H1 (cell line): ENCODE measurements at regions of chr1 and their contacts with region 1.

Region 1: GRCh38 chr1:219066631-219067349 is 106.9 kb upstream of the LYPLAL1 start:
- DNase-seq: no peak
- H3K4me3 ChIP-seq: no peak overlapping the region
- H3K27ac ChIP-seq: no peak overlapping the region
- H3K4me1 ChIP-seq: no peaks in the 10 kb centered on the region
- H3K27me3 ChIP-seq: no peaks in the 10 kb centered on the region
- CTCF ChIP-seq: peak in 1 of 3 experiments; percentile 35; a peak in 2 of 4 replicates
- EP300 ChIP-seq: no peak
- POLR2A ChIP-seq: no peak
- RAD21 ChIP-seq: peak; percentile 64 to 70

Region 2: GRCh38 chr1:219050822-219051125 is 16.0 kb before region 1 on chr1:
- CTCF ChIA-PET with region 1: interaction called, 10 read pairs
- POLR2A ChIA-PET with region 1: no interaction called
- DNase-seq: no peak
- H3K4me3 ChIP-seq: no peak overlapping the region
- H3K27ac ChIP-seq: no peak overlapping the region
- H3K4me1 ChIP-seq: no peaks in the 10 kb centered on the region
- H3K27me3 ChIP-seq: peaks cover 0 to 1% (median 0%) of the 10 kb centered on the region in 4 experiments; a peak in 1 of 7 replicates
- CTCF ChIP-seq: no peak
- EP300 ChIP-seq: no peak
- POLR2A ChIP-seq: no peak
- RAD21 ChIP-seq: no peak

Region 3: GRCh38 chr1:219081943-219082925 is 15.4 kb after region 1 on chr1:
- CTCF ChIA-PET with region 1: interaction called, 29 read pairs
- POLR2A ChIA-PET with region 1: no interaction called
- DNase-seq: no peak
- H3K4me3 ChIP-seq: no peak overlapping the region
- H3K27ac ChIP-seq: no peak overlapping the region
- H3K4me1 ChIP-seq: no peaks in the 10 kb centered on the region
- H3K27me3 ChIP-seq: no peaks in the 10 kb centered on the region
- CTCF ChIP-seq: no peak
- EP300 ChIP-seq: no peak
- POLR2A ChIP-seq: no peak
- RAD21 ChIP-seq: no peak